Tibial artery (tissue), 4 donors: ENCODE measurements at regions of chr14 and their contacts with region 1.

Region 1: DNA sequence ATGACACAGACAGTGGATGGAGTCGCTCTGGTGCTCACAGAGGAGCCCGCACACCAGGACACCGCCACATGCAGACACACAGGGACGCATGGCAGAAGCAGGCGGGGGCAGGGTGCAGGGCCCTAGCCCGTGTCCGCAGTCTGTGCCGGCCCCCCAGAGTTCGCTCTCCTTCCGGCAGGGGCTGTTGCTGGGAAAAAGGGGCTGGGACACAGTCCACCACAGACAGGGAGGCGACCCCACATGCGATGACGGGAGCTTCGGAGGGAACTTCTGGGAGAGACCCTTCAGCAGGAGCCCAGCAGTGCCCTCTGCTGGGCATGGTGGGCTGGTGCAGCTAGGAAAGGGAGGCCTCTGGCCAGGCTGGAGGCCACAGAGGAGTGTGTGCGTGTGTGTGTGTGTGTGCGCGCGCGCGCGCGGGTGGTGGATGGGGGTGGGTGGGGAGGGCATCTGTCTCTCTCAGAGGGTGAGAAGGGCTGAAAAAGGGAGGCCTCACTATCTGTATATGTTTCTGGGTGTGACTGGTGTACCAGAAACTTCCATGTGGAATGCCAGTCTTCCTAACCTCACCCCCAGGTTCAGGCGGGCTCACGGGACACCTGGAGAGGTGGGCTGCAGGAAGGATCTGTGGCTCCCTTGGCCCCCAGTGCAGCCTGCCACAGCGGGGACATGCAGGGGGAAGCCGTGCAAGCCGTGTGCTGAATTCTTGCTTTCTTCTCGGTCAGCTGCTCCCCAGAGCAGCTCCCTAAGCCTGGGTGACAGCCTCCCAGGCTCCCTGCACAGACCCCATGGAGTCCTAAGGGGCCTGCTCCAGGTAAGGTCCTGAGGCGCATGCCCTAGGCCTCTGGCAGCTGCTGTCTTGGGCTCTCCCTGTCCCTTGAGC is 60.7 kb downstream of the PLEKHG3 start:
- DNase-seq: peak; percentile 69 to 85
- H3K4me3 ChIP-seq: peak overlapping the region; percentile 27 to 50
- H3K27ac ChIP-seq: peak overlapping the region; percentile 81 to 83
- H3K4me1 ChIP-seq: peaks cover 0 to 46% (median 39%) of the 10 kb centered on the region in 4 donors
- H3K27me3 ChIP-seq: no peaks in the 10 kb centered on the region
- CTCF ChIP-seq: peak; percentile 96

Region 2: DNA sequence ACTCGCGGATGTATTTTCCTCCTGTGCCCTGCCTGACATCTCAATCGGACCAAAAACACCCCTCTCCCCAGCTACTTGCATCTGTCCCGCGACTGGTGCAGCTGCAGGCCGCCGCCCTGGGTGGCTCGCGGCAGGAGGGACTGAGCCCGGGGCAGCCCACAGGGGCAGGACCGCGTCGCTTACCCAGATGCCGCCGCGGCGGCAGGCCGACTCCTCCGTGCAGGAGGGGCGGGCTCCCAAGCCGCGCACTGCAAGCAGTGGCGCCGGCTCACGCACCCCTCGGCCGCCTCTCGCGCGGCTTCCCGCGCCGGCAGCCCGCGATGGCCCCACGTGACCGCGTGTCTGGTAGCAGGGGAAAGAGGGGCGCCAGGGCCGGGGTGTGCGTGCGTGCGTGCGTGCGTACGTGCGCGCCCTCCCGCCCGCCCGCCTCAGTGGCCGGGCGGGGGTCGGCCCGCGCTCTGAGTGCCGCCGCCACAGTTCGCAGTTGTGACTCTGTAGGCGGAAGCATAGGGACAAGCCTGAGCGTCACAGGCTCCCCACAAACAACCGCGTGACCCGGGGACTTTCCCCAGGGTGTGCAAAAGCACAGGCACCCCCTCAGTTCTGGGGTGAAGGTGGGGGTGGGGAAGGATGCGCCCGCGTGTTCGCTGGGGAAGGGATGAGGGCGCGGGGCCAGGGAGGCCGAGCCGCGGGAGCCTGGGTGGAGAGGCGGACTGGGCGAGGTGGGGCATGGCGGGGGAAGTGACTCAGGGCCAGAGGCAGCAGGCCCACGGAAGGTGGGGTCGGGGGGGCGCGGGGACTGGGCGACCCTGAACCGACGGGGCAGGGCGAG is 261.2 kb before region 1 on chr14 and contains the start of gene ZBTB25:
- intact Hi-C with region 1: loop called (anchors 5 kb)
- DNase-seq: peak; percentile 88 to 95
- H3K4me3 ChIP-seq: peak within 1 kb of the TSS; percentile 68 to 92
- H3K27ac ChIP-seq: peak within 1 kb of the TSS; percentile 95 to 98
- H3K4me1 ChIP-seq: peaks cover 0 to 64% (median 39%) of the 10 kb centered on the region in 4 donors
- H3K27me3 ChIP-seq: no peaks in the 10 kb centered on the region
- CTCF ChIP-seq: no peak

Region 3: DNA sequence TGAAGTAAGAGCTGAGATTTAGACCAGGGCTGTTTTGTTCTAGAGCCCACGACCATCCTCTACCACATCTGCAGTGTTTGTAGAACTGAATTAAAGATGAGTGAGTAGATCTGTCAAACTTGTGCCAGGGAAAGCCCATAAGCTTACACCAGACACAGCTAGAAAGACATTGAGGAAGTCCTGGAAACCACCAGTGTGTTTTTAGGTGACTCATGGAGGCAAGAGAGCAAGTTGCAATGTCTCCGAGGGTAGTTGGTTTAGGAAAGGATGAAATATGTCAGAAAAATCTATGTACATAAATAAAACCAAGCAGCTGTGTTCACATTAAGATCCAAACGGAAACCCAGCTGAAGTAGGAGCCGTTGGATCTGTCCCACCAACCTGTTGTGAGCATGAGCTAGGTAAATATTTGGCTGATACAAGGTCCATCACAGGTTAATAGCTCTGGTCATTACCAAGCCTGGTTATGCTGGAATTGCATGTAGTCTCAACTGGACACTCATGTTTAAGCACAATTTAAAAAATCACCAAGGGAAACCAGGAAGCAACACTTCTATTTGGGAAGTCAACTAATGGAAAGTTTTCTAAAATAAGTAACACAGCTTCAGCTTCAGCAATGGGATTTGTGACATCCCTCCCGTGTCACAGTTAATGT is 110.5 kb before region 1 on chr14:
- intact Hi-C with region 1: no loop called
- DNase-seq: no peak
- H3K4me3 ChIP-seq: no peak overlapping the region
- H3K27ac ChIP-seq: peak overlapping the region; percentile 67 to 69
- H3K4me1 ChIP-seq: peaks cover 0 to 22% (median 9%) of the 10 kb centered on the region in 4 donors
- H3K27me3 ChIP-seq: no peaks in the 10 kb centered on the region
- CTCF ChIP-seq: no peak

Region 4: DNA sequence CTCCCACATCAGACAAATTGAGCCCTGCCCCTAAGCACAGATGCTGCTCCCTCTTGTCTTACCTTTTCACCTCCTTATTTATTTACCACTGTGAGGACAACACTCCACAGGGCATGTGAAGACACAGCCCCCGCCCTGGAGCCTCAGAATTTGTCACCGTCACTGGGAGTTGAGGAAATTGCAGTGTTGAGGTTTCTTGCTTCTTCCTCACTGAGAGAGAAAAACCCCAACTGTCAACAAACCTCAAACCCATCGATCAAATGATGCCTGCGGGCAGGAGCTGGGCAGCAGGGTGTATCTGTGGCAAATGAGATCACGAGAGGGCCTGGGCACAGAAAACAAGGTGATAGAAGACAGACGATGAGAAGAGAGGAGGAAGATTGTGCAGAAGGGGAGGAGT is 91.1 kb before region 1 on chr14:
- intact Hi-C with region 1: loop called (anchors 2 kb)
- DNase-seq: no peak
- H3K4me3 ChIP-seq: no peak overlapping the region
- H3K27ac ChIP-seq: peak overlapping the region; percentile 53 to 64
- H3K4me1 ChIP-seq: peaks cover 0 to 23% (median 20%) of the 10 kb centered on the region in 4 donors
- H3K27me3 ChIP-seq: no peaks in the 10 kb centered on the region
- CTCF ChIP-seq: no peak

Region 5: GRCh38 chr14:64704143-64704742 is 60.6 kb before region 1 on chr14 and contains the start of gene PLEKHG3:
- intact Hi-C with region 1: no loop called
- DNase-seq: peak; percentile 60 to 92
- H3K4me3 ChIP-seq: peak within 1 kb of the TSS; percentile 85 to 88
- H3K27ac ChIP-seq: peak within 1 kb of the TSS; percentile 95
- H3K4me1 ChIP-seq: peaks cover 0 to 52% (median 38%) of the 10 kb centered on the region in 4 donors
- H3K27me3 ChIP-seq: no peaks in the 10 kb centered on the region
- CTCF ChIP-seq: no peak

Region 6: GRCh38 chr14:64736271-64737122 is 28.4 kb before region 1 on chr14:
- intact Hi-C with region 1: no loop called
- DNase-seq: peak in 1 of 2 donors; percentile 65
- H3K4me3 ChIP-seq: no peak overlapping the region
- H3K27ac ChIP-seq: peak overlapping the region; percentile 46 to 50
- H3K4me1 ChIP-seq: peaks cover 0 to 53% (median 32%) of the 10 kb centered on the region in 4 donors
- H3K27me3 ChIP-seq: no peaks in the 10 kb centered on the region
- CTCF ChIP-seq: no peak